Panc1 (cell line): ENCODE measurements at regions of chr3 and their contacts with region 1.

Region 1: DNA sequence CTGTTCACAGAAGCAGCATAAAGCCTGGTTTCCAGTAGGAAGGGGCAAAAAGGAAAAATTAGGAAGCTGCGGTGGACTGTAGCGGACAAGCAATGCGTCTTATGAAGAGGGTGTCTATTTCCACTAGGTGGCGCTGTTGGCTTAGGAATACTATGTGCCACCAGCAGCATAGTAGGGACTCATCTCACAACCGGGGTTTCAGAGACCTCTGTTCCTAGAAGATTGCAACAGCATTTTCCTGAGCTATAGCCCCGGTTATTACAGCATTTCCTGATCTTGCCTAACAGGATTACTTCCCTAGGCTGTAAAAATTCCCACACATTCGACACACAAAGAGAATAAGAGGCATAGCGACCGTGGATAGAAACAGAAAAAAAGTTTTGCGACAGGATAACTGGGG is 683.0 kb downstream of the TBL1XR1 start:
- DNase-seq: peak; percentile 39
- ATAC-seq: peak; percentile 98
- H3K4me3 ChIP-seq: no peak overlapping the region
- H3K27ac ChIP-seq: peak overlapping the region; percentile 35
- H3K4me1 ChIP-seq: peaks cover 5% of the 10 kb centered on the region; the same call in 1 of the 2 replicates
- H3K27me3 ChIP-seq: no peaks in the 10 kb centered on the region
- CTCF ChIP-seq: peak; percentile 85

Region 2: DNA sequence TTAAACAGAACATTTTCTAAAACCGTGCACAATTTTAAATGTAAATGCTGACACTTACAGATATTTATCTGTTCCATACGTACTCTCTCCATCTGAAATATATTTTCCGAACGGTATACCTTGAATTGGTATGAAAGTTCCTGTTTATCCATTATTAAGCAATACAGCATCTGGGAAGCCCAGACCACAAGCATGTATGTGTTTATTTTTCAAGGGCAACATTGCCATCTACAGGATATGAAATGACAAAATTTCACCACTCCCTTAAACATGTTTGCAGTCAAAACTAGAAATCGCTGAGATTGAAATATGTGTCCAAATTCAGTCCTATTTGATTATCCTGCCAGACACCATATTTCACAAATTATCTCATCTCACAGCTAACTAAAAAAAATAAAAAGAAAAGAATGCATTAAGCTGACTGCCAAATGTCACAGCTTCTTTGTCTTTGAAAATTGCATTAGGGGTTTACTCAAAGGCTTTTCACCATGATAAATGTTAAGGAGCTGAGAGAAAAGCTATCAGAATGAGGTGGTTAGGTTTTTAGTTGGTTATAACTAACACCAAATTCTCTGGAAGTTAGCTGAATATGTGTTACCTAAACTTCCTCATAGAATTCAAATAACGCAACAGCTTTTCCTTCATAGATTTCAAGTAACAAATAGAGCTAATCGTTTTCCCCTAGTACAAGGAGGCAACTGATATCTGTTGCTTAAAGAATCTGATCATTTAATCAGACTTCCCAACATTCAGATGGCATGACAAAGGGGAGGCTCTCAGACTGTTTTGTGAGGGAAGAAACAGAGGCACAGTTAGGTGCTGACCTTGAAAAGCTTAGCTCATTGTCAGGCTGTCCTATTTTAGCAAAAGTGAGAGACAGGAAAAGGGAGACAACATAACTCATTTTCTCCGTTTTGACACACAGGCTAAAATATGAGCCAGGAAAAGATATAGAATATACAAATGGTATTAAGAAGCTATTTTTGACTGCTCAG is 149.8 kb after region 1 on chr3:
- CTCF ChIA-PET with region 1: no interaction called
- POLR2A ChIA-PET with region 1: no interaction called
- in situ Hi-C with region 1: no loop called
- intact Hi-C with region 1: loop called (anchors 2 kb)
- DNase-seq: no peak
- ATAC-seq: peak; percentile 84
- H3K4me3 ChIP-seq: no peak overlapping the region
- H3K27ac ChIP-seq: no peak overlapping the region
- H3K4me1 ChIP-seq: no peaks in the 10 kb centered on the region
- H3K27me3 ChIP-seq: no peaks in the 10 kb centered on the region
- CTCF ChIP-seq: peak; percentile 44; the same call in 1 of the 2 replicates

Region 3: GRCh38 chr3:176789281-176789705 is 275.0 kb after region 1 on chr3:
- CTCF ChIA-PET with region 1: no interaction called
- POLR2A ChIA-PET with region 1: no interaction called
- in situ Hi-C with region 1: no loop called
- intact Hi-C with region 1: no loop called
- DNase-seq: no peak
- ATAC-seq: no peak
- H3K4me3 ChIP-seq: no peak overlapping the region
- H3K27ac ChIP-seq: no peak overlapping the region
- H3K4me1 ChIP-seq: no peaks in the 10 kb centered on the region
- H3K27me3 ChIP-seq: no peaks in the 10 kb centered on the region
- CTCF ChIP-seq: no peak

Region 4: GRCh38 chr3:177037241-177037640 is 522.9 kb after region 1 on chr3:
- CTCF ChIA-PET with region 1: no interaction called
- POLR2A ChIA-PET with region 1: no interaction called
- in situ Hi-C with region 1: no loop called
- intact Hi-C with region 1: loop called (anchors 10 kb)
- DNase-seq: no peak
- ATAC-seq: no peak
- H3K4me3 ChIP-seq: no peak overlapping the region
- H3K27ac ChIP-seq: no peak overlapping the region
- H3K4me1 ChIP-seq: peaks cover 5% of the 10 kb centered on the region; the same call in 1 of the 2 replicates
- H3K27me3 ChIP-seq: no peaks in the 10 kb centered on the region
- CTCF ChIP-seq: no peak